ENCODE measurements at regions of chr20 and their contacts with region 1.

Region 1: DNA sequence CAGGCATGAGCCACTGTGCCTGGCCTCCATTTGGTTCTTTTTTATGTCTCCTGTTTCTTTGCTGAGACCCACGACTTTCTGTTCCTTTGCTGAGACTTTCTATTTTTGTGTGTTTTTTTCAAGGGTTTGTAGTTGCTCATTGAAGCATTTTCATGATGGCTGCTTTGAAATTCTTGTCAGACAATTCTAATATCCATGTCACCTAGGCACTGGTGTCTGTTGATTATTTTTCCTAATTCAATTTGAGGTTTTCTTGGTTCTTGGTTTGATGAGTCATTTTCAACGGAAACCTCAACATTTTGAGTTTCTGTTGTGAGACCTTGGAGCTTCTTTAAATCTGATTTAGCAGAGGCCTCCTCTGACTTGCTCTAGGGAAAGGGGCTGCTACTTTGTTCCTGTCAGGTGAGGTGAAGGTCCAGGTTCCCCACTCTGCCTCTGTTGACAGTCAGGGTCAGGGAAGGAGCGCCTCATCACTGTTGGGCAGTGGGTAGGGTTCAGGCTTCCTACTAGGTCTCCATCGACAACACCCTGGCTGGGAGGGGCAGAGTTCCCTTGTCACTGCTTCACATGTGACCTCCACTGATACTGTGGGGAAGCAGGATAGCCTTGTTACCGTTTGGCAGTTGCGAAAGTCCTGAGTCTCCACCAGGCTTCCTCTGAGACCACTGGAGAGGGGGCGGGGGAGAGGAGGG is 67.2 kb upstream of the RNF24 start:
- DNase-seq: peak in 1 of 2 donors; percentile 37
- H3K4me3 ChIP-seq: peak overlapping the region in 1 of 3 donors; percentile 39
- H3K27ac ChIP-seq: peak overlapping the region; percentile 66 to 81
- H3K4me1 ChIP-seq: no peaks in the 10 kb centered on the region
- H3K27me3 ChIP-seq: no peaks in the 10 kb centered on the region
- CTCF ChIP-seq: no peak
- POLR2A ChIP-seq: no peak

Region 2: DNA sequence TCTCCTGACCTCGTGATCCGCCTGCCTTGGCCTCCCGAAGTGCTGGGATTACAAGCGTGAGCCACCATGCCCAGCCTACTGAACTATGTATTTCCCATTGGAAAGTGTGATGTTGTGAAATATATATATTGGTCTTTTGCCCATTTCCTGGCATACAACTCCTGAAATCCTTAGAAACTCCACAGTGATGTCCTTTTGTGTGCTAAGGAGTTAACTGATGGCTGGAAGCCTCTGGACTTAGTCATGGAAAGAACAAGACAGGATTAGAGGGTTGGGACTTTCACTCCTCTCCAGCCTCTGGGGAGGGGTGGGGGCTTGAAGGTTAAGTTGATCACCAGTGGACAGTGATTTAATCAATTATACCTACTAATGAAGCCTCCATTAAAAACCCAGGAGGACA is 186.2 kb before region 1 on chr20:
- intact Hi-C with region 1: loop called (anchors 2 kb)
- DNase-seq: no peak
- H3K4me3 ChIP-seq: no peak overlapping the region
- H3K27ac ChIP-seq: peak overlapping the region; percentile 16 to 52
- H3K4me1 ChIP-seq: peaks cover 0 to 27% of the 10 kb centered on the region in 2 donors
- H3K27me3 ChIP-seq: no peaks in the 10 kb centered on the region
- CTCF ChIP-seq: no peak
- POLR2A ChIP-seq: no peak

Region 3: DNA sequence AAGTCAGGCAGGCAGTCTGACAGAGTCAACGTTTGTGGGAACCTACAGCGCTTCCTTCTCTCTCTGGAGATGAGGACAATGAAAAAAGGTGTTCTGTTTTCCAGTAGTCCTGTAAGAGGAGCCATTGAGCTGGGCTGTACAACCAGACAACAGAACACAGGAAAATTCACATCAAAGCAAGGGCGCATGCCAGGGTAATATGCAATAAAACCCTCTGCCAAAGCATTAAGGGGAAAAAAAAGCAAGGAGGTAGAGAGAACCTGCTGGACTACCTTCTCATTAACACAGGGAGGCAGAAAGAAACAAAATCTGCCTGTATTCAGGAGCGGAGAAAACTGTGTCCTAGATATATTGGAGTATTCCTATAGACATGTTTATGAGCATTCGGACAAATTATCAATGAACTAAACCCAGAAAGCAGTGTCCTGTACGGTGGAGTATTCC is 68.5 kb before region 1 on chr20:
- intact Hi-C with region 1: loop called (anchors 10 kb)
- DNase-seq: peak in 1 of 2 donors; percentile 83
- H3K4me3 ChIP-seq: peak overlapping the region in 2 of 3 donors; percentile 87 to 94
- H3K27ac ChIP-seq: peak overlapping the region; percentile 93 to 95
- H3K4me1 ChIP-seq: peaks cover 0 to 7% of the 10 kb centered on the region in 2 donors
- H3K27me3 ChIP-seq: no peaks in the 10 kb centered on the region
- CTCF ChIP-seq: peak; percentile 34 to 74 (median 58)
- POLR2A ChIP-seq: no peak